Activated CD8-positive, alpha-beta memory T cell treated with anti-CD3 and anti-CD28 coated beads, Interleukin-2, amount 10 ng/mL, durations not matched to agents 7 days and 5 days (primary cell): ENCODE measurements at regions of chr12 and their contacts with region 1.

Region 1: GRCh38 chr12:21989819-21990412 is 48.7 kb upstream of the ABCC9 start:
- DNase-seq: no peak
- ATAC-seq: no peak
- H3K4me3 Mint-ChIP-seq: no peak overlapping the region
- H3K27ac Mint-ChIP-seq: no peak overlapping the region
- H3K4me1 Mint-ChIP-seq: peaks cover 9% of the 10 kb centered on the region
- H3K27me3 Mint-ChIP-seq: peaks cover 16% of the 10 kb centered on the region

Region 2: GRCh38 chr12:21697904-21698630 is 291.8 kb before region 1 on chr12:
- CTCF ChIA-PET with region 1: interaction called, 10 read pairs
- DNase-seq: no peak
- ATAC-seq: no peak
- H3K4me3 Mint-ChIP-seq: no peak overlapping the region
- H3K27ac Mint-ChIP-seq: no peak overlapping the region
- H3K4me1 Mint-ChIP-seq: no peaks in the 10 kb centered on the region
- H3K27me3 Mint-ChIP-seq: peaks cover 2% of the 10 kb centered on the region